Right lobe of liver (tissue), 6 donors: ENCODE measurements at regions of chr17 and their contacts with region 1.

Region 1: DNA sequence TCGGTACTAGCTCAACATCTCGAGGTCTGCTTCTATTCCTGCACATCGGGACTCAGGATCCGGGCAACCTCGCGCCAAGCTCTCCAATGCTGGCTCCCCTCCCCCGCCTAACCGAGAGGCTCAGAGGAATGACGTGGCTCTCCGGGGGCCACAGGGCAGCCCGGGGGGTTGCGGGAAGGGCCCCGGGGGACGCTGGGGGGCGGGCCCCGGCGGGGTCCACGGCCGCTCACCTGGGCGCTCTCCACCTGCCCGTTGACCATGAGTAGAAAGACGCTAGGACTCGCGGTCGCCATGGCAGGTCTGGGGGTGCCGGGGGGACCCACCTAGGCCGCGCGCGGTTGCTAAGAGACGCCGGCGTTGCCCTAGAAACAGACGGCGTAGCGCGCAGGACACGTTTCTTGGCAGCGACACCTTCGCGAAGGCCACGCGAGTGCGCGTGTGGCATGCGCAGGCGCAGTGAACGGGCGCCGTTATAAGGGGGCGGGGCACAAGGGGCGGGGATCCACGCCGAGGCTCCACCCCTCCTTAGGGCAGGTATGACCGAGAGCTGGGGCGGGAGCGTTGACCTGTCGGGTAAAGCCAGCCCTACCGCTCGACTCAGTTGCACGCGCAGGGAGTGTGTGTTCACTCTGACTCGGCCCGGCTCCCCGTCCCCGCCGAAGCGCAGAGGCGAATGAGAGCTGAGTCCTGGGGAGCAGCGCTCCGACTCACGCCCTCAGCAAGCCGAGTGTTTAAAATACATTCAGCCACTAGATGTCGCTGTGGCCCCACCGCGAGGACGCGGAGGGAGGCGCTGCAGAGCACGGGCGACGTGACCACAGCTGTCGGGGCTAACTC is at the start of gene B9D1:
- DNase-seq: peak; percentile 95 to 97 (median 97)
- ATAC-seq: peak; percentile 93 to 96 (median 96)
- H3K4me3 ChIP-seq: peak within 1 kb of the TSS; percentile 71 to 86 (median 78)
- H3K27ac ChIP-seq: peak within 1 kb of the TSS; percentile 87 to 97 (median 88)
- H3K4me1 ChIP-seq: peaks cover 0 to 8% (median 3%) of the 10 kb centered on the region in 4 donors
- H3K27me3 ChIP-seq: no peaks in the 10 kb centered on the region
- CTCF ChIP-seq: peak; percentile 99
- POLR2A ChIP-seq: no peak
- total RNA-seq, gene B9D1: 2.3 to 27.9 (median 5.7) TPM

Region 2: DNA sequence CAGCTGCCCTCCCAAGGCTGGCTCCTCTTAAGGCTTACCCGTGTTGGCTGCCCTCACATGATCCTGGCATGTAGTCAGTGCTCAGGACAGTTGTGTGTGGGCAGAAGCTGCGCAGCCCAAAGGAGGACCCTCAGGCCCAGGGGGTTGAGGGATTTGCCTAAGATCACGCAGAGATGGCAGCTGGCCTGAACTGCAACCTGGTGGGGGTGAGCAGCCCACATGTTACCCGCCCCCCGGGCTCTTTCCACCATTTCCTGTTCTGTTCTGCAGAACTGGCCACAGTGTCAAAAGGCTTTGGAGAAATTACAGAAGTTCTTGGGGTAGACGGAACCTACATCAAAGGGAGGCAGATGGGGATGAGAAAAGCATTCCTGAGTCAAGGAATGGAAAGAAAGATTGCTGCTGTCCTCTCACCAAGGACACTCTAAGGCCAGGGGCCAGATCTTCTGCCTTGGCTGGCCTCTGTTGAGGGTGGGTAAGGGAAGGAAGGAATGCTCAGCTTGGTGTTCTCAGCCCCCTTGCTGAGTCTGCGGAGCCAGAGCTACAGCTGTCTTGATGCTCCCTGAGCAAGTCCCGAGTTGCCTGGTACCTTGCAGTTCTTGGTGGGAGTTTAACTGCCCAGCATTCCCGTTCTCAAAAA is 72.3 kb before region 1 on chr17:
- intact Hi-C with region 1: loop called in 1 of 2 experiments (anchors 10 kb)
- DNase-seq: no peak
- ATAC-seq: no peak
- H3K4me3 ChIP-seq: no peak overlapping the region
- H3K27ac ChIP-seq: no peak overlapping the region
- H3K4me1 ChIP-seq: no peaks in the 10 kb centered on the region
- H3K27me3 ChIP-seq: no peaks in the 10 kb centered on the region
- CTCF ChIP-seq: no peak
- POLR2A ChIP-seq: no peak

Region 3: DNA sequence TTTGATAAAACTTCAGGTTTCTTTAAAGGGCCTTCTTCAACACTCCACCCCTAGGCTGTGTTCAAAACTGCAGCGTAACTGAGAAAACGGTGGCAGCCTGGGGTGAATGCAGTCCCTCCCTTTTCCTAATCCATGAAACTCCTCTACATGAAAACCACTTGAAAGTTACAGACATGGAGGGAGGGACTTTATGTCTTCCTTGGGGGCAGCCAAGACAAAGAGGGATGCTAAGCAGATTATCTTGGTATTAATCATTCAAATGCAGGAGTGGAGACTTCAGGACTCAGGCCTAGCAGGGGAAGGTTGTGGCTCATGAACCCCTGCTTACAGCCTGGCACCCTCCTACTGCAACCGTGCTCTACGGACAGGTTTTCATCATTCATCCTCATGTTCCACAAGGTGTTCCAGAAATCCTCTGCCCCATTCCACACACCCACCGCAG is 95.4 kb after region 1 on chr17:
- intact Hi-C with region 1: loop called in 1 of 2 experiments (anchors 10 kb)
- DNase-seq: no peak
- ATAC-seq: no peak
- H3K4me3 ChIP-seq: no peak overlapping the region
- H3K27ac ChIP-seq: no peak overlapping the region
- H3K4me1 ChIP-seq: no peaks in the 10 kb centered on the region
- H3K27me3 ChIP-seq: no peaks in the 10 kb centered on the region
- CTCF ChIP-seq: no peak
- POLR2A ChIP-seq: no peak

Region 4: DNA sequence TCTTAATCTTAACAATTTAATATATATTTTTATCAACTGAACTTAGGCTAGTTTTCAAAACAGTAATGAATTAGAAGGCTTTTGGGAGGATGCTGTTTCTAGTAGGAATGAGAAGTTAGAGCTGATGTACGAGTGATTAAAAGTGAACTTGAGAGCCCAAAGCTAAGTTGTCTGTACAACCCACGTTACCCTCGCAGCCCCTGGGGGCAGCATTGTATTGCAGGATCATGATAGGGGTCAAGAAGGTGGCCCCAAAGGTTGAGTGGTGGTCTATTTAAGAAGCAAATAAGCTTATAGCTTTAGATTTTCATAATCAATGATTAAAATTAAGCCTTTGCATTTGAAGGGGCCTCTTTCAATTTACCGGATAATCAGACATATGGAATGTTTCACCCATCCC is 252.4 kb after region 1 on chr17:
- intact Hi-C with region 1: no loop called
- DNase-seq: no peak
- ATAC-seq: no peak
- H3K4me3 ChIP-seq: no peak overlapping the region
- H3K27ac ChIP-seq: no peak overlapping the region
- H3K4me1 ChIP-seq: no peaks in the 10 kb centered on the region
- H3K27me3 ChIP-seq: no peaks in the 10 kb centered on the region
- CTCF ChIP-seq: no peak
- POLR2A ChIP-seq: no peak